OCI-LY7 (cell line): ENCODE measurements at regions of chr3 and their contacts with region 1.

Region 1: GRCh38 chr3:133506215-133506901 is 67.1 kb upstream of the CDV3 start:
- DNase-seq: peak; percentile 77
- H3K4me3 ChIP-seq: peak overlapping the region; percentile 33
- H3K27ac ChIP-seq: peak overlapping the region; percentile 32
- H3K4me1 ChIP-seq: peaks cover 24% of the 10 kb centered on the region
- CTCF ChIP-seq: no peak

Region 2: DNA sequence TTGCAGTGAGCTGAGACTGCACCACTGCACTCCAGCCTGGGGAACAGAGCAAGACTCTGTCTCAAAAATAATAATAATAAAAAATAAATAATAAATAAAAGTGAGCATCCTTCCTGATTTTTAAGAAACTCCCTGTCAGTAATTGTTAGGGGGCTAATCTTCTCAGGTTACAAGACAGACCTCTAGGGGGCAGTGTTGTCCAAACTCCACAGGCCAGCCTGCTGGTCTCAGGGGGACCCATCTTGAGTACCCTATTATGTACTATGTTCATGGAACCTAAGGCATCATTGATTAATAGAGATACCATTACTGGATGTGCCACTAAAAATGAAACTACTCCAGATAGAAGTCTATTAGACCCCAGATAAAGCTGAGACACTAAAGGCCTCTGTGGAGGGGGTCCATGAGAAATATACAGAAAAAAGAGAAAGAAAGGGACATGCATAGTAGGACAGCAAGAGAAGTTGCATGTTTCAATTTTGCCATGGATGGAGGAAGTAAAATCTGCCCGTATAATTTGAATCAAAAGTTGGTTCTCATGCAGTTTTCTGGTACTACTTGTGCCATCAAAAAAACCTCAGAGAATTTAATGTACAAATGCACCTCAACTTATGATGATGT is 18.3 kb before region 1 on chr3:
- CTCF ChIA-PET with region 1: interaction called, 4 read pairs
- POLR2A ChIA-PET with region 1: interaction called, 18 read pairs
- intact Hi-C with region 1: no loop called
- DNase-seq: no peak
- H3K4me3 ChIP-seq: peak overlapping the region; percentile 61
- H3K27ac ChIP-seq: peak overlapping the region; percentile 92
- H3K4me1 ChIP-seq: peaks cover 49% of the 10 kb centered on the region
- CTCF ChIP-seq: peak; percentile 74

Region 3: DNA sequence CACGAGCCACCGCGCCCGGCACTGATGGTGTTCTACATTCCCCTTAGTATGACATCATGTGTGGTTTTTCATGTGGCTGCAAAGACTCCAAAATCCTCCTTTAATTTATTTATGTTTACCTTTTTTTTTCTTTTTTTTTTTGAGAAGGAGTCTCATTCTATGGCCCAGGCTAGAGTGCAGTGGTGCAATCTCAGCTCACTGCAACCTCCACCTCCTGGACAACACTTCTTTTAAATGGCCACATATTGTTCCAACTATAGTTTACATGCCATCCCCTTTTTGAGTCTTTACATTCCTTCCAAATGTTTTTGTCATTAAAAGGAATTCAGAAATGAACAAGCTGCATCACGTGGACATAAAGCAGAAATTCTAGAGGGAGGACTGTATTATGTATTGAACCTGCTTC is 56.8 kb after region 1 on chr3:
- CTCF ChIA-PET with region 1: no interaction called
- POLR2A ChIA-PET with region 1: interaction called, 3 read pairs
- intact Hi-C with region 1: loop called (anchors 5 kb)
- DNase-seq: no peak
- H3K4me3 ChIP-seq: no peak overlapping the region
- H3K27ac ChIP-seq: no peak overlapping the region
- H3K4me1 ChIP-seq: peaks cover 34% of the 10 kb centered on the region
- CTCF ChIP-seq: no peak